ENCODE measurements at regions of chr4 and their contacts with region 1.

Region 1: DNA sequence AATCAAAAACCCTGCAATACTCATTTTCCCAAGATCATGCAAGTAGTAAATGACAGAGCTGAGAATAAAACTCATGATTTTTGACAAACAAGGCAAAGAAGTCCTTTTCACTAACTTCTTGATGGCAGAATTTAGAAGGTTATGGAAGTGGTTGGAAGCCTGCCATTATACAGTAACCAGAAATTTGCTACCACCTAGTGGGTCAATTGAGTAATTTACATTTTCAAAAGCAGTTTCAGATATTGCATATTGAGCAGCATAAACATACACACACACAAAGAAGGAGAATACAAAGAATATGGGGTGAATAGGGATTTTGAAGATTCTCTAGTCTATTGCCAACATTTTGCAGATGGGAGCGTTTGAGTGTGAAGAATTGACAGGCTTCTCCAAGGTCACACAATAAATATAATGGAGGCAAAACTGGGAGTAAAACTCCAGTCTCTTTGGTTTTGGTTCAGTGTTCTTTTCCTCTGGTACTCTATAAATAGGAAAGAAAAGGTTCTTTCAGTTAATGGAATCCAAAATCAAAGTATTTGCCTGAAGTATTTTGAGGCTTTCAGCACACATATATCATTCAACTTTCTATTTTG is 70.2 kb downstream of the GC start:
- DNase-seq: no peak
- H3K4me3 ChIP-seq: no peak overlapping the region
- H3K27ac ChIP-seq: no peak overlapping the region
- H3K4me1 ChIP-seq: no peaks in the 10 kb centered on the region
- H3K27me3 ChIP-seq: no peaks in the 10 kb centered on the region
- CTCF ChIP-seq: peak; percentile 73

Region 2: DNA sequence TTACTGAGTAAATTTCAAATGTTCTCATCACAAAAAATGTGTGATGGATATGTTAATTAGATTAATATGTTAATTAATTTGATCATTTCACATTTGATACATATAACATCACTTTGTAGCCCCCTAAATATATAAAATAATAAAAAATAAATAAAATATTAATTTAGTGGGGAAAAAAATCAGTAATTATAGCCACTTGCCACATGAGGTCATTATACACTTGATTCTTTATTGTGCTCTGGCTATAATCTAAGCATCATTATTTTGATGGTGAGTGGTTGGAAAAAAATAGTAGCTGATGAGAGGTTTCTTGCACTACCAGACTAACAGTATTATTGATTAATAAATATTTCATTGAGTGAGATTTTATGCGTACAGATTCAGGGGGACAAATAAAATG is 662.9 kb before region 1 on chr4:
- CTCF ChIA-PET with region 1: no interaction called
- POLR2A ChIA-PET with region 1: no interaction called
- intact Hi-C with region 1: loop called (anchors 5 kb)
- DNase-seq: no peak
- H3K4me3 ChIP-seq: no peak overlapping the region
- H3K27ac ChIP-seq: no peak overlapping the region
- H3K4me1 ChIP-seq: no peaks in the 10 kb centered on the region
- H3K27me3 ChIP-seq: no peaks in the 10 kb centered on the region
- CTCF ChIP-seq: no peak

Region 3: DNA sequence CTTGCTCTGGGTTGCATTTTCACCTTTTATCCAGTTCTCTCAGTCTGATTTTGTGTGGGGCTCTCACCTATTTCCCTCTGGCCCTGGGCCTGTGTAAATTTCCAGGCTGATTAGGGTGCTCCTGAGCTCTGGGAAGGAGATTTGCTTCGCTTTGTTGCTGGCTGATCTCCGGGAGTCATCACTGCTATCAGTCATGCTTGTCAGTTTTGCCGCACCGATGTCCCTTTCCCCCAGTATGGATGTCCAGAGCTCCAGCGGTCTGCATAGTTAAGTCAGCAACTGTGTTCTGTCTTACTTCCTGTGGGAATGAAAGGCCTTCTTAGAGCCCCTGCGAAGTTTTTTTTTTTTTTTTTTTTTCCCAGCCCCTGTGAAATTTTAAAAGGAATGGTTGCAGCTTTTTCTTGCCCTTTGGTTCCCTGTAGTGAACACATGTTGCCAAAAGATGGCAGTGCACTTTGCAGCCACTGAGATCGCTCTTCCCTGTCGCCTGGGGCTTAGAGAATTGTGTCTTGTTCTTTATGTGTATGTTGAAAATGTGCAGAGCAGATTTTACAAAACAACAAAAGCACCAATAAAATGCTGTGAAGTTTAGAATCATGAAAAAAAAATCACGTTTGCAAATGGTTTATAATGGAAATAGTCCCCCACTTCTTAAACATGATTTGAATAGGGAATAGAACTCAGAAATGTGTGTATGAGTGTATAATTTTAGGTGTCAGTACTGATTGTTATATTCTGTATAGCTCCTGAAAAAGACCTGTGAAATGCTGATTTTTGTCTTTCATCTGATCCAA is 484.0 kb before region 1 on chr4:
- CTCF ChIA-PET with region 1: interaction called, 3 read pairs
- POLR2A ChIA-PET with region 1: no interaction called
- intact Hi-C with region 1: loop called (anchors 1 kb)
- DNase-seq: peak in 1 of 2 experiments; percentile 3
- H3K4me3 ChIP-seq: no peak overlapping the region
- H3K27ac ChIP-seq: no peak overlapping the region
- H3K4me1 ChIP-seq: no peaks in the 10 kb centered on the region
- H3K27me3 ChIP-seq: no peaks in the 10 kb centered on the region
- CTCF ChIP-seq: peak; percentile 64

Region 4: DNA sequence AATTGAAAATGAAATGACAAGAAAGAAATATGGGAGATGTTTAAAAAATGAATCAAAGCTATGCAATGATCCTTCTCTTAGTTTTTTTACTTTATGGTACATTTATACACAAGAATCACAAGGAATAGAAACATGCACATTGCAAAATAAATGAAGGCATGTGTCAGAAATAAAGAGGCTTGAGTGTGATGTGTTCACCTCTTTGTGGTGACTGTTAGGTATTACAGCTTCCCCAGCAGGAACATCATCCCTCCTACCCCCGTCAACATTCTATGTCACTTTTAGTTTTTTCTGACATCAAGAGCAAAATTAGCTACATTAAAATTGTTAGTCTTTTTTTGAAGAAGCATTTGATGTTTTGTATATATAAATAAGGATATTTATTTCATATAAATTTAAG is 160.1 kb before region 1 on chr4:
- CTCF ChIA-PET with region 1: no interaction called
- POLR2A ChIA-PET with region 1: no interaction called
- intact Hi-C with region 1: loop called (anchors 5 kb)
- DNase-seq: no peak
- H3K4me3 ChIP-seq: no peak overlapping the region
- H3K27ac ChIP-seq: no peak overlapping the region
- H3K4me1 ChIP-seq: no peaks in the 10 kb centered on the region
- H3K27me3 ChIP-seq: no peaks in the 10 kb centered on the region
- CTCF ChIP-seq: peak; percentile 43; the same call in 1 of the 2 replicates

Region 5: DNA sequence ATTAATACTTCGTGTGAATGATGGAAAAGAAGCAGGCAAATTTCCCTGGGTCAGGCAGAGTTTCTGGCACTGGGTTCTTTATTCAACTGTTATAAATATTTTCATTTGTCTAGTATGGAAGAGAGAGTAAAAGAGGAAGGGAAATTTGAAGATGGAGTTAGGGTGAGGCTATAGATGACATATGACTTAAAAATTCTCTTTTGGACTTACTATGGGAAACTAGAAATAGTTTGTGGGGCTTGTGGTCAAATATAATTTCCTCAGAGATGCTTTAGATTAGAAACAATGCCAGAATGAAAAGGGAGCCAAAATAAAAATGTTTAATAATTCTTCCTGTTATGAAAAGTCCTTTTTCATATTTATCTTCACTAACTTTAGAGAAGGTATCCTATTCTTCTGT is 33.0 kb before region 1 on chr4:
- CTCF ChIA-PET with region 1: no interaction called
- POLR2A ChIA-PET with region 1: no interaction called
- intact Hi-C with region 1: no loop called
- DNase-seq: no peak
- H3K4me3 ChIP-seq: no peak overlapping the region
- H3K27ac ChIP-seq: no peak overlapping the region
- H3K4me1 ChIP-seq: no peaks in the 10 kb centered on the region
- H3K27me3 ChIP-seq: no peaks in the 10 kb centered on the region
- CTCF ChIP-seq: no peak

Region 6: DNA sequence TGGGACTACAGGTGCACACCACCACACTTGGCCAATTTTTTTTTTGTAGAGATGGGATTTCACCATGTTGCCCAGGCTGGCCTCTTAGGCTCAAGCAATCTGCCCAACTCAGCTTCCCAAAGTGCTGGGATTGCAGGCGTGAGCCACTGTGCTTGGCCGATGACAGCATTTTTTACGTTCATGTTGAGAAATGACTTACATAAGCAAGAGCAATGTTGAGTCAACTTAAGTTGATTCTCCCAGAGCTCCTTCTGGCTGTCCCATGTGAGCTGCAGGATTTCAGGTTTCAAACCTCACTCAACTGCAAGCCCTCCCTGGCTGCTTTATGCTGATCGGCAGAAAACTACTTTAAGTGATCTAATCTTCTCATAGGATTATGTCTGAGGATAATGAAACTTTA is 16.7 kb before region 1 on chr4:
- CTCF ChIA-PET with region 1: no interaction called
- POLR2A ChIA-PET with region 1: no interaction called
- intact Hi-C with region 1: no loop called
- DNase-seq: no peak
- H3K4me3 ChIP-seq: no peak overlapping the region
- H3K27ac ChIP-seq: no peak overlapping the region
- H3K4me1 ChIP-seq: no peaks in the 10 kb centered on the region
- H3K27me3 ChIP-seq: no peaks in the 10 kb centered on the region
- CTCF ChIP-seq: no peak

Measured in PC-9 (cell line).